Activated CD8-positive, alpha-beta T cell treated with anti-CD3 and anti-CD28 coated beads, Interleukin-2, amount 10 ng/mL, durations not matched to agents 7 days and 5 days (primary cell): ENCODE measurements at regions of chr19 and their contacts with region 1.

Region 1: DNA sequence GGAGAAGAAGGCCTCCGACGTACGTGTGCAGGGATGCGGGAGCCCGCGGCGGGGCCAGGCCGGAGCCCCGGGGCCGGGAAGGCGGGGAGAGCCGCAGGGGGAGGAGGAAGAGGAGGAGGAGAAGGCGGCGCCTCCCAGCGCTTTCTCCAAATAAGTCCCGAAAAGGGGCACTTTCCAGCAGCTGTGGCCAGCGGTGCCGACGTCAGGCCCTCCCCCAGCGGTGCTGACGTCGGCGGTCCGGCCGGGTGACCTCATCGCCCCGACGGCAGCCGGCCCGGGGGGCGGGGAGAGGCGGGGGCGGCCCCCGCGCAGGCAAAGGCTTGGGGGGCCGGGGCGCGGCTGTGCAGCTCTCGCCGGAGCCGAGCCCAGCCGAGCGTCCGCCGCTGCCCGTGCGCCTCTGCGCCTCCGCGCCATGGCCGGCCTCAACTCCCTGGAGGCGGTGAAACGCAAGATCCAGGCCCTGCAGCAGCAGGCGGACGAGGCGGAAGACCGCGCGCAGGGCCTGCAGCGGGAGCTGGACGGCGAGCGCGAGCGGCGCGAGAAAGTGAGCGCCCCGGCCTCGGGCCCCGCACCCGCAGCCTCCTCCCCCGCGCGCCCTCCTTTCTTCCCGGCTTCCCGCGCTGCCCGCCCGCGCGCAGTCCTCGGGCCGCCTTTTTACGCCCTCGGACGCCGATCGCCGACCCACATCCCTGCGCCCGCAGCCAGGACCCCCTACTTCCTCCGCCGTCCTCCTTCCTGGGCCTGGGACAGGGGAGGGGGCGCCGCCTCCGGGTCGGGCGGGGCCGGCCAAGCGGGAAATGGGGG is at the start of gene TPM4:
- DNase-seq: peak; percentile 95
- ATAC-seq: peak; percentile 64
- H3K4me3 Mint-ChIP-seq: peak within 1 kb of the TSS; percentile 82
- H3K27ac Mint-ChIP-seq: peak within 1 kb of the TSS; percentile 96
- H3K4me1 Mint-ChIP-seq: peaks cover 71% of the 10 kb centered on the region
- H3K27me3 Mint-ChIP-seq: no peaks in the 10 kb centered on the region
- total RNA-seq, gene TPM4: 424 to 436 TPM

Region 2: GRCh38 chr19:15863272-15863671 is 213.1 kb before region 1 on chr19:
- CTCF ChIA-PET with region 1: no interaction called
- POLR2A ChIA-PET with region 1: no interaction called
- DNase-seq: no peak
- ATAC-seq: no peak
- H3K4me3 Mint-ChIP-seq: no peak overlapping the region
- H3K27ac Mint-ChIP-seq: no peak overlapping the region
- H3K4me1 Mint-ChIP-seq: peaks cover 4% of the 10 kb centered on the region
- H3K27me3 Mint-ChIP-seq: peaks cover 8% of the 10 kb centered on the region

Region 3: DNA sequence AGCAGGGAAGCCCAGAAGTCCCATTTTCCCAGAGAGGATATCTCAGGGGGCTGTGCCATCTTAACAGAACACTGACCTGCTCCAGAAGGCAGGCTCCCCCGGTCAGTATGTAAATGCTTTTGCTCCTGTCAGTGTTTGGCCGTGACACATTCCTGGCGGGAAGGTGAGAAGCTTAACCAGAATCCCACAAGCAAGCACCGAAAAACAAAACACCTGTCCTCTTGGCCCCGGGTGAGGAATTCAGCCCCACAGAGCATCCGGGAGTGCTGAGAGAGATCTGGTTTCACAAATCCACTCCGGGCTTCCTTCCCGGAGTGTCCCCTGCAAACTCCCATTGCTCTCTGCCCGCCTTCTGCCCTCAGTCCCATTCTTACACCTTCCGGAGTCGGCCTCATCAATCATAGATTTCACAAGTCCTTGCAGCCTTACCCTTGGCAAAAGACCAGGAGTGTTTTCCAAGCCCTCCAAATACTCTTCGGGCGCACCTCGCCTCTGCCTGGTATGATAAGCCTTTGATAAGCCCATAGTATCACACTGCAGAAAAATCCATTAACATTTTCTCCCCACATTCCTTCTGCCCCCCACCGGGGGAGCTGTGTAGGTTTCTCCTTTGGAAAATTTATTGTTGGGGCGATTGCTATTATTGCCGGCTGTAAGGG is 12.1 kb after region 1 on chr19:
- CTCF ChIA-PET with region 1: interaction called, 11 read pairs
- POLR2A ChIA-PET with region 1: interaction called, 33 read pairs
- DNase-seq: no peak
- ATAC-seq: no peak
- H3K4me3 Mint-ChIP-seq: no peak overlapping the region
- H3K27ac Mint-ChIP-seq: peak overlapping the region; percentile 37
- H3K4me1 Mint-ChIP-seq: peaks cover 66% of the 10 kb centered on the region
- H3K27me3 Mint-ChIP-seq: no peaks in the 10 kb centered on the region

Region 4: DNA sequence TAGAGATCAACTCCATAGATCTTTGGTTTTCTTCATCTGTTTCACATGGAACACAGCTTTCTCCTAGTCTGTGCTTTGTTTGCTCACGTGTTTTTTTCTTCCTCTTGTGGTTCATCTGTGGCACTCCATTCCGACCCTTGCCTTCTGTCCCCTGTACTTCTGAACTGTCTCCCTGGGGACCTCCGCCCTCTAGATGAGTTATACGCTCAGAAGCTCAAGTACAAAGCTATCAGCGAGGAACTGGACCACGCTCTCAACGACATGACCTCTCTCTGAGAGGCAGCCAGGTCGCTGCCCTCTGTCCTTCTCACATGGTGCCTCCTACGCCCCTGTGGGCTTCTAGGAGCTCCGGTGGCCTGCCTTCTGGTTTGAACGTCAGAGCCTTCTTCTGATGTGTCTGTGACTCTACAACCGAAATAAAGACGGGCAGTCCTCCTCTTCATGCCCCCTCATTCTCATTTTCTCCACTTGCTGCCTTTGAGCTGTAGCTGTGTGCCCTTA is 18.8 kb after region 1 on chr19:
- CTCF ChIA-PET with region 1: interaction called, 8 read pairs
- POLR2A ChIA-PET with region 1: interaction called, 10 read pairs
- DNase-seq: no peak
- ATAC-seq: peak; percentile 65
- H3K4me3 Mint-ChIP-seq: no peak overlapping the region
- H3K27ac Mint-ChIP-seq: peak overlapping the region; percentile 67
- H3K4me1 Mint-ChIP-seq: peaks cover 49% of the 10 kb centered on the region
- H3K27me3 Mint-ChIP-seq: no peaks in the 10 kb centered on the region